ENCODE measurements at regions of chr10 and their contacts with region 1.

Region 1: DNA sequence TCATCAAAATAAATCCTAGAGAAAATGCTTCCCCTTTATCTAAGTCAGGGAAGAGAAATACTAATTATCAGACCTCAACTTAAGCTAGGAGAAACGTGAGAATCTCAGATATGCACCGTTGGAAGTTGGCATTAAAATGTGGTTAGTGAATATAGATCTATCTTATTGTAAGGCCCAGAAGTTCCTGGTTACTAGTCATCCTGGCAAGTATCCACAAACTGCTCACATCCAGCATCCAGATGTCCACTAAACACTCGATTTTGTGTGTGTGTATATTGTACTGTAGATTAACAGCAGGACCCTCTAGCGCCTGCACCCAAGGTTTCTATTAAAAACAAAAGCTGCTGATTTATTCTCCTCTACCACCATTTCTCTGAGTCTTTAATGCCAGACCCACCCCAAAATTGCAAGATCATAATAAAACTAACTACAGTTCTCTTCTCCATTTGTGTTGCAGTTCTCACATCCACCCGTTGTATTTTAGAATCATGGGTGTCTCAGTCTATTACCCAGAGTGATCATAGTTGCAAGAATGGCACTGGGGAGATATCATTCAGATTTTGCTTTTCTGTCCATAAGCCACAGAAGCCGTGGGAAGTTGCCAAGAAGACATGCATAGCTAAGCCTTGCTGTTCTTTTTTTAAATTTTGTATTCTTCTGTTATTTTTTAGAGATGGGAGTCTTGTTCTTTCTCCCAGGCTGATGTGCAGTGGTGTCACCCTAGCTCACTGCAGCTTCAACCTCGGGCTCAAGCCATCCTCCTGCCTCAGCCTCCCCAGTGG is 165.4 kb downstream of the KIAA1217 start:
- DNase-seq: no peak
- ATAC-seq: no peak

Region 2: DNA sequence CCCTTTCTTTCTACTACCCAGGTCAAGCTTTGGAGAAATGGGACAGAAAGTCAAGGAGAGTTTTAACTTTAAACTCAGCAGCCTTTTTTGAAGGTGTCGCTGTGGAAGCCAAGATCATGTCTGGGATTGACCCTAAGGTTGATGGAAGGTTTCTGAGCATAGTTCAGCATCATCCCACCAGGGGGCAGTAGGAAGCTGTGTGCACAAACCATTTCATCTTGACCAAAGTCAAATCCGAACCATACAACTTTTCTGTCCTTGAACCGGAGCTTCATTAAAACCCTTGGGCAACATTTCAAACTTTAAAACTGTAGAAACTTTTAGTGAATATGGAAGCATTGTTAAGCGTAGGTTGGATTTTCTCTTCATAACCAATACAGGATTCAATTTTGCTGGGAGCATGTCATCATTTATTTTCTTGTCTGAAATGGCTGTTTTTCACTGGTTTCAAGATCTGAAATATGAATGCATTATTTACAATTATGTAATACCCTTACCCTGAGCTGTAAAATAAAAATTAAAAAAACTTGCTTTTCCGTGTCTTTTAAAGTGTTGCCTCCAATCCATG is 379.8 kb before region 1 on chr10:
- intact Hi-C with region 1: loop called (anchors 10 kb)
- DNase-seq: peak; percentile 82
- ATAC-seq: peak; percentile 83

Region 3: GRCh38 chr10:24513155-24513554 is 138.8 kb after region 1 on chr10:
- intact Hi-C with region 1: no loop called
- DNase-seq: no peak
- ATAC-seq: no peak

Region 4: GRCh38 chr10:24579906-24580305 is 205.6 kb after region 1 on chr10:
- intact Hi-C with region 1: no loop called
- DNase-seq: no peak
- ATAC-seq: no peak

Measured in sciatic nerve (tissue), 2 donors.